GM12878 (cell line): ENCODE measurements at regions of chr11 and their contacts with region 1.

Region 1: DNA sequence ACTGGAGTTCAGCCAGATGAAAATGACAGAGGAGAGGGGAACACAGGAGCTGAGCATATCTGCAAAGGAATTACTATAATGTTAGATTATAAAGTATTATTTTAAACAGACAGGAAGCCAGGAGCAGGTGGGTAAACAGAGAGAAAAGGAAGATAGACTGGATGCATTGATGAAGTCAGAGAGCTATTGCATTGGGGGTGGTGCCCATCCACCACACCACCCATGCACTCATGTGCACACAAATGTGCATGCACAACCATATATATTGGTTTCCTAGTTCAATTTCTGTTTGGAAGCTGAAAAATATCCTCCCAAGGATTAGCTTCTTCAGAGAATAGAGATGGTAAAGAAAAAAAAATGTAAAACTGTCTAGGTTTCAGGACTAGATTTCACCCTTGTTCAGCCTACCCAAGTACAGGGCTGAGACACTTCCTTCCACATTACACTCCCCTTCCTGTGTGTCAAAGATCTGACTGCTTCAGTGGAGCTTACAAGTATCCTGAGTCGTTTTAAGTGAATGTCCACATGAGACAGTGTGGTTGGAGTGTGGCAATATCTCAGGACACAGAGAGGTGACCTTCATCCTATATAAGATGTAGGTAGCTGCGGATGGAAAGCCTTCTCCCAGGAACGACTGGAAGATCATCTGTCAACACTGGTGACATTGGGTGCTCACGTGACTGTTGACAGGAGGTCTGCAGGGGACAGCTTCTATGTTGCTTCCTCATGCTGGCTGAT is 12.2 kb upstream of the SMPD1 start:
- DNase-seq: no peak
- ATAC-seq: peak; percentile 51
- H3K4me3 ChIP-seq: no peak overlapping the region
- H3K27ac ChIP-seq: no peak overlapping the region
- H3K4me1 ChIP-seq: peaks cover 6% of the 10 kb centered on the region; the same call in 1 of the 2 replicates
- H3K27me3 ChIP-seq: no peaks in the 10 kb centered on the region
- CTCF ChIP-seq: no peak
- EP300 ChIP-seq: no peak
- POLR2A ChIP-seq: no peak
- RAD21 ChIP-seq: no peak

Region 2: GRCh38 chr11:6353367-6353987 is 24.6 kb before region 1 on chr11:
- CTCF ChIA-PET with region 1: interaction called, 19 read pairs
- POLR2A ChIA-PET with region 1: no interaction called
- RAD21 ChIA-PET with region 1: interaction called, 5 read pairs
- SMC1A ChIA-PET with region 1: interaction called, 10 read pairs
- in situ Hi-C with region 1: no loop called
- intact Hi-C with region 1: no loop called
- DNase-seq: peak; percentile 25
- ATAC-seq: peak; percentile 91
- H3K4me3 ChIP-seq: no peak overlapping the region
- H3K27ac ChIP-seq: no peak overlapping the region
- H3K4me1 ChIP-seq: no peaks in the 10 kb centered on the region
- H3K27me3 ChIP-seq: no peaks in the 10 kb centered on the region
- CTCF ChIP-seq: peak; percentile 97 to 98 (median 98)
- EP300 ChIP-seq: no peak
- POLR2A ChIP-seq: no peak
- RAD21 ChIP-seq: peak; percentile 99

Region 3: DNA sequence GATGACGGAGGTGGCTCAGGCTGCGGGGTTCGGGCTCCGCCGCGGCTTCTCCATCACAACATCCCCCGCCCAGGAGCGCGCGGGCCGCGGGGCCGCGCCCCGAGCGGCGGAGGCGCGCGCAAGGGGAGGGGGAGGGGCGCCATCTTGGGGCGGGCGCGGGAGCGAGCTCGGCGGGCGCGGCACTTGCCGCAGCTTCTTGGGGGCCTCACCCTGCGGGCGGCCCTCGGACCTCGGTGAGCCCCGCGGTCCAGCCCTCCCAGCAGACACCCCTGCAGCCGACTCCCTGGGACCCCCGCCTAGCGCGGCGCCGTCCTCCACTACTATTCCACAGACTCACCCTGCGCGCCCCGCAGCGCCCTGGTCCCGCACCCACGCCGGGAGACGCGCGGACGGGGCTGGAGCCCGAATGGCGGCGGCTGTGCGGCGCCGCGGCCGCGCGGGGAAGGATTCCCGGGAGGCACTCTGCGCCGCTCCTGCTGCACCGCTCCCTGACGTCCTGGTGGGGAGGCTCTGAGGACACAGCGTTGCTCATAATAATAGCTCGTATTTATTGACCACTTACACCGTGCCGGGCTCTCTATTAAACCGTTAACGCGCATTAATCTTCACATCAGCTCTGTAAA is 41.0 kb after region 1 on chr11 and contains the start of gene APBB1:
- CTCF ChIA-PET with region 1: interaction called, 13 read pairs
- POLR2A ChIA-PET with region 1: no interaction called
- RAD21 ChIA-PET with region 1: interaction called, 3 read pairs
- SMC1A ChIA-PET with region 1: interaction called, 6 read pairs
- in situ Hi-C with region 1: no loop called
- intact Hi-C with region 1: no loop called
- DNase-seq: no peak
- ATAC-seq: peak; percentile 60
- H3K4me3 ChIP-seq: peak within 1 kb of the TSS; percentile 85
- H3K27ac ChIP-seq: no peak within 1 kb of the TSS
- H3K4me1 ChIP-seq: peaks cover 8% of the 10 kb centered on the region
- H3K27me3 ChIP-seq: peaks cover 4 to 9% of the 10 kb centered on the region in 2 experiments; a peak in 3 of 4 replicates
- CTCF ChIP-seq: no peak
- EP300 ChIP-seq: no peak
- POLR2A ChIP-seq: peak; percentile 66
- RAD21 ChIP-seq: no peak
- polyA plus RNA-seq, gene APBB1: 0.31 to 1.3 TPM

Region 4: DNA sequence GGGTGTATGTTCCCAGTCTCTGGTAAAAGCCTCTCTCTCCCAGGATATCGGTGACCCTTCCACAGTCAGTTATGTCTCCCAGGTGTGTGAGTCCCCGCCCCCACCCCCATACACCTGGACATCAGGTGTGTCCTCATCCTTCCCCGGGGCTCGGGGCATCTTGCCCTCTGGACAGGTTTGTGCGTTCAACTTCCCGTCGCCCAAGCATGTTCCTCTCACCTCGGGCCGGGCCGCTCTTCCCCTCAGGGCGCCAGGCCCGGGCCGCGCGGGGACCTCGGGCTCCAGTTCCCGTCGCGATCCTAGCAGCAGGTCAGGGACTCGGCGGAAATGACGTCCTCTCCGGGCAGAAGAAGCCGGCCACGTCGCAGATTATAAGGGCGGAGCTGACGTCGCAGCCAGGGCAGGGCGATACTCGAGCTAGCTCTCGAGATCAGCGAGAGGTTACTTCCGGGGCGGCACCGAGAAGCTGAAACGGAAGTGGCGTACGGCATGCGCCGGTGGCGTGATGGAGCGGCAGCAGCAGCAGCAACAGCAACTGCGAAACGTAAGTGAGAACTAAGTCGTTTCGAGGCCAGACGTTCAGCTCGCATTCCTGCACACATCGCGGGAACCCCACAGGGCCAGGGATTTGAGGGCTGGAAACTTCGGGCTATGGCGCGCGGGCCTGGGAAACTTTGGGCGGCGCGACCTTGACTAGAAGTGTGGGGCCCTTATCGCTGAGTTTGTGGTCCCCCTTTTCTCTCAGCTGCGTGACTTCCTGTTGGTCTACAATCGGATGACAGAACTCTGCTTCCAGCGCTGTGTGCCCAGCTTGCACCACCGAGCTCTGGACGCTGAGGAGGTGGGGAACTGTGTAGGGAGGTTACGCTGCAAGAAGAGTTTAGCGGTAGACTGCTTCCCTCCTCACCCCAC is 103.2 kb after region 1 on chr11 and contains the starts of genes ARFIP2 and TIMM10B:
- CTCF ChIA-PET with region 1: interaction called, 15 read pairs
- POLR2A ChIA-PET with region 1: no interaction called
- RAD21 ChIA-PET with region 1: interaction called, 14 read pairs
- SMC1A ChIA-PET with region 1: interaction called, 14 read pairs
- in situ Hi-C with region 1: no loop called
- intact Hi-C with region 1: no loop called
- DNase-seq: peak; percentile 91
- ATAC-seq: peak; percentile 98
- H3K4me3 ChIP-seq: peak within 1 kb of the TSS; percentile 98
- H3K27ac ChIP-seq: peak within 1 kb of the TSS; percentile 80
- H3K4me1 ChIP-seq: peaks cover 19% of the 10 kb centered on the region
- H3K27me3 ChIP-seq: no peaks in the 10 kb centered on the region
- CTCF ChIP-seq: no peak
- EP300 ChIP-seq: no peak
- POLR2A ChIP-seq: peak; percentile 98
- RAD21 ChIP-seq: no peak
- polyA plus RNA-seq, gene ARFIP2: 11.7 to 18.9 TPM
- polyA plus RNA-seq, gene TIMM10B: 93.3 to 126 TPM

Region 5: DNA sequence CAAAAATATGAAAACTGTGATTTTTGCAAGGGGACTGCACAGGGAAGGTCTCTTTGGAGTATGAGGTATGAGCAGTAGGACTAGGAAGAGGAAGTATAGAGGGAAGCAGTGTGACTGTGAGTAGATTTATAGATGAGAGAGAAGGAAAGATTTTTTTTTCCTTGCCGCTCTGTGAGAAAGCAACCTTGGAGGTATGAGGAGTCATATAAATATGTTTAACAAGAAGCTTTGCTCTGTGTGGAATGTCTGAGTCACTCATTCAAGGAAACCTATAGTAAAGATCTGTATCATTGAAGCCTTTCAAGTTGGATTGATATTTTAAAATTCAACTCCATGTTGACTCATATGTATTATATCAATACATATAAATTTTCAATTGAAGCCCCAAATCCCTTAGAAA is 145.2 kb after region 1 on chr11:
- CTCF ChIA-PET with region 1: interaction called, 12 read pairs
- POLR2A ChIA-PET with region 1: no interaction called
- RAD21 ChIA-PET with region 1: interaction called, 16 read pairs
- SMC1A ChIA-PET with region 1: interaction called, 18 read pairs
- in situ Hi-C with region 1: no loop called
- intact Hi-C with region 1: no loop called
- DNase-seq: no peak
- ATAC-seq: no peak
- H3K4me3 ChIP-seq: no peak overlapping the region
- H3K27ac ChIP-seq: no peak overlapping the region
- H3K4me1 ChIP-seq: peaks cover 12% of the 10 kb centered on the region; the same call in 1 of the 2 replicates
- H3K27me3 ChIP-seq: no peaks in the 10 kb centered on the region
- CTCF ChIP-seq: no peak
- EP300 ChIP-seq: no peak
- POLR2A ChIP-seq: no peak
- RAD21 ChIP-seq: no peak

Region 6: DNA sequence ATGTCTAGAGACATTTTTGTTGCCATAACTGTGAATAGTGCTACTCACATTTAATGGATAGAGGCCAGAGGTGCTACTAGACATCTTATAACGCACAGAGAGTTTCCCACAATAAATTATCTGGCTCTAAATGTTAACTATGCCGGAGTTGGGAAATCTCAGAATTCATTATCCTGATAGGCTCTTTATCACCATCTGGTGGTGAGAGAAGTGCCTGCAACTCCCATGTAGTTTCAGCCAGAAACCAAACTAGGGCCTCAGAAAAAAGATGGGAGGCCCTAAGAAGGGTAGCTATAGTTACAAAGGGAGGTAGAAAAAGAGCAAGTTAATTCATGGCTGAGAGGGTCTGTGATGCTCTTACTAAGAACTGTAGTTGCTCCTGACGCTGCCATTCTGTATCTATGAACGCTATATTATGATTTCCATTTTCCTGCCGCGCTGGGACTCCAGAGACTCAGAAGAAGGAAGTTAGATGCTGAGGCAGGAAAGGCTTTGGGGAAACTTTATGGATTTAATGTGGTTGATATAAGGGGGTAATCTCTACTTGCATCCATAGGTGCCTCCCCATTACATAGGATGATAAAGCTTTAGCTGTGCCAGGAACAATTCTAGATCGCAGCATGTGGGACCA is 327.9 kb after region 1 on chr11:
- CTCF ChIA-PET with region 1: interaction called, 48 read pairs
- POLR2A ChIA-PET with region 1: no interaction called
- RAD21 ChIA-PET with region 1: interaction called, 37 read pairs
- SMC1A ChIA-PET with region 1: interaction called, 31 read pairs
- in situ Hi-C with region 1: no loop called
- intact Hi-C with region 1: loop called (anchors 1 kb)
- DNase-seq: no peak
- ATAC-seq: peak; percentile 83
- H3K4me3 ChIP-seq: no peak overlapping the region
- H3K27ac ChIP-seq: no peak overlapping the region
- H3K4me1 ChIP-seq: no peaks in the 10 kb centered on the region
- H3K27me3 ChIP-seq: no peaks in the 10 kb centered on the region
- CTCF ChIP-seq: peak; percentile 77 to 92 (median 84)
- EP300 ChIP-seq: no peak
- POLR2A ChIP-seq: no peak
- RAD21 ChIP-seq: peak; percentile 71

Region 7: DNA sequence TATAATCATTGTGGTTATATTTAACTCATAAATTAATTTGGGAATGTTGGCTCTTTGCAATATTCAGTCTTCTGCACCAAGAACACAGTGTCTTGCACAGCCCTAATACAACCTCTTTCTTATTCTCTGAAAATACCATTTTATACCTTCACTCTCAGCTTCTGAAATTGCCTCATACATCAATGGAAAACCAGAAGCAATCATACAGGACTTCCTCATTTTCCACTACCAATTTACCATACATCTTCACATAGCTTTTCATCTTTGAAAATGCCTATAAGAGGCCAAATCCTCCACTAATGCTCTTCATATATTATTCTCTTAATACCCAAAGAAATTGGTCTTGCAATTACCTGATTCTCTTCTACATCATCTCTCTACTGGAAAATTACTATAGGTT is 400.4 kb after region 1 on chr11:
- CTCF ChIA-PET with region 1: no interaction called
- POLR2A ChIA-PET with region 1: no interaction called
- RAD21 ChIA-PET with region 1: no interaction called
- SMC1A ChIA-PET with region 1: no interaction called
- in situ Hi-C with region 1: no loop called
- intact Hi-C with region 1: no loop called
- DNase-seq: no peak
- ATAC-seq: no peak
- H3K4me3 ChIP-seq: no peak overlapping the region
- H3K27ac ChIP-seq: no peak overlapping the region
- H3K4me1 ChIP-seq: no peaks in the 10 kb centered on the region
- H3K27me3 ChIP-seq: no peaks in the 10 kb centered on the region
- CTCF ChIP-seq: no peak
- EP300 ChIP-seq: no peak
- POLR2A ChIP-seq: no peak
- RAD21 ChIP-seq: no peak

Region 8: DNA sequence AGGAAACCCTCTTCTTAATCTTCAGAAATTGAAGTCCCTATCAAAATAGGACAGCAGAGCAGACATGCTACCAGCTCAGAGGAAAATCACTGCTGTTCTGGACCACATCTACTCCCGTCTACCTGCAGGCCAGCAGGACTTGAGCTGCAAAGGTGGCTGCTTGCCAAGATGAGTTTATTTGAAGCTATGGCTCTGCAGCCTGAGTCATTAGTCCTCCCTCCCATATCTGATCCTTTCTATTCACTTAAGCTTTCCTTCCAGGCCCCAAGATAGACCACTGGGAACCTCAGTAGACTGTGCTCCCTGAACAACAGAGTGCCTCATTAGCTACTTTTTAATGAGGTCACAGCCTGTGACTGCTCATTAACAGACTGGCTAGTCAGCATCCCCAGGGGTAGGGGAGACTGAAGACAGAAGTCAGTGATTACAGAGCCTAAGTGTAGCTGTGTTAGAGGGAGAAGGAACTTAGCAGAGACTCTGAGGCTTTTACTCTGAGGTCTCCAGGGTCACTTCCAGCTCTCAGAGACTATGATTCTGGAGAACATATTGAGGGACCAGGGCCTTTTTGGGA is 478.0 kb after region 1 on chr11:
- CTCF ChIA-PET with region 1: no interaction called
- POLR2A ChIA-PET with region 1: no interaction called
- RAD21 ChIA-PET with region 1: no interaction called
- SMC1A ChIA-PET with region 1: no interaction called
- in situ Hi-C with region 1: no loop called
- intact Hi-C with region 1: no loop called
- DNase-seq: no peak
- ATAC-seq: peak; percentile 61
- H3K4me3 ChIP-seq: no peak overlapping the region
- H3K27ac ChIP-seq: no peak overlapping the region
- H3K4me1 ChIP-seq: no peaks in the 10 kb centered on the region
- H3K27me3 ChIP-seq: no peaks in the 10 kb centered on the region
- CTCF ChIP-seq: no peak
- EP300 ChIP-seq: no peak
- POLR2A ChIP-seq: no peak
- RAD21 ChIP-seq: no peak

Region 9: GRCh38 chr11:6900327-6900999 is 522.4 kb after region 1 on chr11:
- CTCF ChIA-PET with region 1: no interaction called
- POLR2A ChIA-PET with region 1: no interaction called
- RAD21 ChIA-PET with region 1: no interaction called
- SMC1A ChIA-PET with region 1: no interaction called
- in situ Hi-C with region 1: no loop called
- intact Hi-C with region 1: no loop called
- DNase-seq: no peak
- ATAC-seq: peak; percentile 42; the same call in 2 of the 3 replicates
- H3K4me3 ChIP-seq: no peak overlapping the region
- H3K27ac ChIP-seq: no peak overlapping the region
- H3K4me1 ChIP-seq: no peaks in the 10 kb centered on the region
- H3K27me3 ChIP-seq: no peaks in the 10 kb centered on the region; a peak in 1 of 4 replicates
- CTCF ChIP-seq: peak in 1 of 3 experiments; percentile 17; a peak in 2 of 6 replicates
- EP300 ChIP-seq: no peak
- POLR2A ChIP-seq: no peak
- RAD21 ChIP-seq: no peak

Region 10: GRCh38 chr11:7020183-7020917 is 642.3 kb after region 1 on chr11 and contains the starts of genes NLRP14 and ZNF214:
- CTCF ChIA-PET with region 1: no interaction called
- POLR2A ChIA-PET with region 1: no interaction called
- RAD21 ChIA-PET with region 1: no interaction called
- SMC1A ChIA-PET with region 1: no interaction called
- in situ Hi-C with region 1: no loop called
- intact Hi-C with region 1: no loop called
- DNase-seq: no peak
- ATAC-seq: peak; percentile 32
- H3K4me3 ChIP-seq: no peak within 1 kb of the TSS
- H3K27ac ChIP-seq: no peak within 1 kb of the TSS
- H3K4me1 ChIP-seq: no peaks in the 10 kb centered on the region
- H3K27me3 ChIP-seq: peaks cover 0 to 1% of the 10 kb centered on the region in 2 experiments; a peak in 2 of 4 replicates
- CTCF ChIP-seq: no peak
- EP300 ChIP-seq: no peak
- POLR2A ChIP-seq: no peak
- RAD21 ChIP-seq: no peak
- polyA plus RNA-seq, gene NLRP14: 0.02 to 0.04 TPM
- polyA plus RNA-seq, gene ZNF214: not detected